GM12878 (cell line): ENCODE measurements at regions of chr6 and their contacts with region 1.

Region 1: GRCh38 chr6:42901536-42901957 is 14.3 kb upstream of the PTCRA start:
- DNase-seq: peak; percentile 54
- ATAC-seq: peak; percentile 99
- H3K4me3 ChIP-seq: no peak overlapping the region
- H3K27ac ChIP-seq: no peak overlapping the region
- H3K4me1 ChIP-seq: no peaks in the 10 kb centered on the region
- H3K27me3 ChIP-seq: no peaks in the 10 kb centered on the region
- CTCF ChIP-seq: peak; percentile 68 to 89 (median 78); a peak in 5 of 6 replicates
- EP300 ChIP-seq: no peak
- POLR2A ChIP-seq: no peak
- RAD21 ChIP-seq: peak; percentile 98

Region 2: GRCh38 chr6:42661540-42662153 is 239.9 kb before region 1 on chr6:
- CTCF ChIA-PET with region 1: interaction called, 13 read pairs
- POLR2A ChIA-PET with region 1: no interaction called
- RAD21 ChIA-PET with region 1: interaction called, 6 read pairs
- SMC1A ChIA-PET with region 1: interaction called, 11 read pairs
- in situ Hi-C with region 1: no loop called
- intact Hi-C with region 1: loop called (anchors 1 kb)
- DNase-seq: peak; percentile 16
- ATAC-seq: peak; percentile 94
- H3K4me3 ChIP-seq: no peak overlapping the region
- H3K27ac ChIP-seq: no peak overlapping the region
- H3K4me1 ChIP-seq: no peaks in the 10 kb centered on the region
- H3K27me3 ChIP-seq: no peaks in the 10 kb centered on the region
- CTCF ChIP-seq: peak; percentile 74 to 91 (median 86)
- EP300 ChIP-seq: no peak
- POLR2A ChIP-seq: no peak
- RAD21 ChIP-seq: peak; percentile 93

Region 3: DNA sequence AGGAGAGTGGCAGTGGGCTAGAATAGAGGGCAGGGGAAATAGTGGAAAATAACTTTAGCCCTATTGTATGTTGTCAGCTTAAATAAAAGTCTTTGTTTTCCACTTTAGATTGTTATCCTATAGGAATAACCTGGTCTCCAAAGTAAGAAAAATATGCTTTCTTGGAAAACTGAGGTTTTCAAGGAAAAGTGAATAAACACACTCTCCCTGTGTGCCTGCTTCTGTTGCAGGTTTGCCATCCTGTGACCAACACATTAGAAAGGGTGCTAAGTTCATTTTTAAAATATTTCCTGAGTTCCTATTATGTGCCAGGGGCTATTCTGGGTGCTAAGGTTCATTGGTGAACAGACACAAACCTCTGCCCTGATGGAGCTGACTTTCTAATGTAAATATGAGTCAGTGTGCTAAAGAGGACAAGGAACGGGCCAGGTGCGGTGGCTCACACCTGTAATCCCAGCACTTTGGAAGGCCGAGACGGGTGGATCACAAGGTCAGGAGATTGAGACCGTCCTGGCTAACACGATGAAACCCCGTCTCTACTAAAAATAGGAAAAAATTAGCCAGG is 96.2 kb before region 1 on chr6:
- CTCF ChIA-PET with region 1: no interaction called
- POLR2A ChIA-PET with region 1: no interaction called
- RAD21 ChIA-PET with region 1: no interaction called
- SMC1A ChIA-PET with region 1: no interaction called
- in situ Hi-C with region 1: no loop called
- intact Hi-C with region 1: no loop called
- DNase-seq: no peak
- ATAC-seq: no peak
- H3K4me3 ChIP-seq: no peak overlapping the region
- H3K27ac ChIP-seq: no peak overlapping the region
- H3K4me1 ChIP-seq: no peaks in the 10 kb centered on the region
- H3K27me3 ChIP-seq: no peaks in the 10 kb centered on the region
- CTCF ChIP-seq: no peak
- EP300 ChIP-seq: no peak
- POLR2A ChIP-seq: no peak
- RAD21 ChIP-seq: no peak

Region 4: GRCh38 chr6:42915732-42916131 is 14.2 kb after region 1 on chr6 and contains the start of gene PTCRA:
- CTCF ChIA-PET with region 1: interaction called, 15 read pairs
- POLR2A ChIA-PET with region 1: interaction called, 5 read pairs
- RAD21 ChIA-PET with region 1: no interaction called
- SMC1A ChIA-PET with region 1: no interaction called
- in situ Hi-C with region 1: no loop called
- intact Hi-C with region 1: no loop called
- DNase-seq: no peak
- ATAC-seq: peak; percentile 55
- H3K4me3 ChIP-seq: no peak within 1 kb of the TSS
- H3K27ac ChIP-seq: no peak within 1 kb of the TSS
- H3K4me1 ChIP-seq: peaks cover 6% of the 10 kb centered on the region
- H3K27me3 ChIP-seq: no peaks in the 10 kb centered on the region
- CTCF ChIP-seq: no peak
- EP300 ChIP-seq: no peak
- POLR2A ChIP-seq: no peak
- RAD21 ChIP-seq: no peak
- polyA plus RNA-seq, gene PTCRA: 0.14 TPM in 1 of 2 experiments, not detected in the other

Region 5: GRCh38 chr6:42984001-42984923 is 82.7 kb after region 1 on chr6 and contains the start of gene PPP2R5D:
- CTCF ChIA-PET with region 1: interaction called, 14 read pairs
- POLR2A ChIA-PET with region 1: no interaction called
- RAD21 ChIA-PET with region 1: interaction called, 6 read pairs
- SMC1A ChIA-PET with region 1: interaction called, 3 read pairs
- in situ Hi-C with region 1: no loop called
- intact Hi-C with region 1: no loop called
- DNase-seq: peak; percentile 94
- ATAC-seq: peak; percentile 97
- H3K4me3 ChIP-seq: peak within 1 kb of the TSS; percentile 98
- H3K27ac ChIP-seq: peak within 1 kb of the TSS; percentile 79
- H3K4me1 ChIP-seq: peaks cover 23% of the 10 kb centered on the region
- H3K27me3 ChIP-seq: no peaks in the 10 kb centered on the region
- CTCF ChIP-seq: no peak
- EP300 ChIP-seq: no peak
- POLR2A ChIP-seq: peak; percentile 92
- RAD21 ChIP-seq: no peak
- polyA plus RNA-seq, gene PPP2R5D: 1.5 to 1.6 TPM

Region 6: GRCh38 chr6:43059168-43060033 is 157.9 kb after region 1 on chr6 and contains the starts of genes KLC4 and MRPL2:
- CTCF ChIA-PET with region 1: no interaction called
- POLR2A ChIA-PET with region 1: interaction called, 3 read pairs
- RAD21 ChIA-PET with region 1: no interaction called
- SMC1A ChIA-PET with region 1: interaction called, 5 read pairs
- in situ Hi-C with region 1: no loop called
- intact Hi-C with region 1: loop called (anchors 5 kb)
- DNase-seq: peak; percentile 97
- ATAC-seq: peak; percentile 98
- H3K4me3 ChIP-seq: peak within 1 kb of the TSS; percentile 95
- H3K27ac ChIP-seq: peak within 1 kb of the TSS; percentile 87
- H3K4me1 ChIP-seq: peaks cover 3% of the 10 kb centered on the region; the same call in 1 of the 2 replicates
- H3K27me3 ChIP-seq: no peaks in the 10 kb centered on the region
- CTCF ChIP-seq: no peak
- EP300 ChIP-seq: no peak
- POLR2A ChIP-seq: peak; percentile 94
- RAD21 ChIP-seq: no peak
- polyA plus RNA-seq, gene KLC4: 0.90 to 2.4 TPM
- polyA plus RNA-seq, gene MRPL2: 29.7 to 42.1 TPM

Region 7: GRCh38 chr6:43328528-43328927 is 427.0 kb after region 1 on chr6:
- CTCF ChIA-PET with region 1: no interaction called
- POLR2A ChIA-PET with region 1: no interaction called
- RAD21 ChIA-PET with region 1: no interaction called
- SMC1A ChIA-PET with region 1: no interaction called
- in situ Hi-C with region 1: no loop called
- intact Hi-C with region 1: no loop called
- DNase-seq: no peak
- ATAC-seq: no peak
- H3K4me3 ChIP-seq: no peak overlapping the region
- H3K27ac ChIP-seq: no peak overlapping the region
- H3K4me1 ChIP-seq: no peaks in the 10 kb centered on the region
- H3K27me3 ChIP-seq: no peaks in the 10 kb centered on the region
- CTCF ChIP-seq: no peak
- EP300 ChIP-seq: no peak
- POLR2A ChIP-seq: no peak
- RAD21 ChIP-seq: no peak